ENCODE measurements at regions of chr10 and their contacts with region 1.

Region 1: GRCh38 chr10:69696073-69696731 is 66.2 kb downstream of the FAM241B start:
- DNase-seq: peak; percentile 87
- H3K4me3 ChIP-seq: no peak overlapping the region
- H3K27ac ChIP-seq: peak overlapping the region; percentile 49
- H3K4me1 ChIP-seq: no peaks in the 10 kb centered on the region
- H3K27me3 ChIP-seq: peaks cover 4% of the 10 kb centered on the region
- CTCF ChIP-seq: peak; percentile 69 to 72

Region 2: DNA sequence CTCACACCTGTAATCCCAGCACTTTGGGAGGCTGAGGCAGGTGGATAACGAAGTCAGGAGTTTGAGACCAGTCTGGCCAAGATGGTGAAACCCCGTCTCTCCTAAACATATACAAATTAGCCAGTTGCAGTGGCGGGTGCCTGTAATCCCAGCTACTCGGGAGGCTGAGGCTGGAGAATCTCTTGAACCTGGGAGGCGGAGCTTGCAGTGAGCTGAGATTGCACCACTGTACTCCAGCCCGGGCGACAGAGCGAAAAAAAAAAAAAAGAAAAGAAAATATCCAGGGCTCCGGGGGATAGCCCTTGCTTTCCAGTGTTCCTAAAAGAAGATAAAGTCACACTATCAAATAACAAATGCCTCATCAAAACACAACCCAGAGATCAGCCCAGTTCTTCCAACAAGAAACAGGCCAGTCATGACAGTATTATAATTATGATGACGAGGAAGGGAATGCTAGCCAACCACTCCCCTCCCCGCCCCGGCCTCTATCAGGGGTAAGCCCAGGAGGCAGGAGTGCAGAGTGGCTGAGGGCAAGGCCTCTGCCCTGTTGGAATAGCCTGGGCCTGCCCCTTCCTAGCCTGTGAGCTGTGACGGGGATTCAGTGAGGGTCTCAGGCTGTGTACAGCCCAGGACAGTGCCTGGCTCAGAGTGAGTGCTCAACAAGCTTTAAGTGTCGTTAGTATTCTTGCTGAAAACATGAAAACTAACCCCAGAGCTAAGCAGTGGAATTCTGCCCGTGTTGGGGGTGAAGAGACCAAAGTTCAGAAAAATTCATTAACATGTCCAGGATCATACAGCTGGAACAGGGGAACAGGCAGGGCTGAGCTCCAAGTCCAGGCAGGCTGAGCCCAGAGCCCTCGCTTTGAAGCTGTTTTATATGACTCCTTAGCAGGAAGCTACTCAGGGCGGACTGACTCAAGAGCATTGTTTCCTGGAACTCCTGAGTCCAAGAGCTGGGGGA is 11.9 kb before region 1 on chr10:
- CTCF ChIA-PET with region 1: no interaction called
- dilution Hi-C with region 1: no loop called
- in situ Hi-C with region 1: no loop called
- intact Hi-C with region 1: loop called (anchors 1 kb)
- DNase-seq: peak; percentile 61
- H3K4me3 ChIP-seq: no peak overlapping the region
- H3K27ac ChIP-seq: peak overlapping the region; percentile 75
- H3K4me1 ChIP-seq: peaks cover 24% of the 10 kb centered on the region
- H3K27me3 ChIP-seq: no peaks in the 10 kb centered on the region
- CTCF ChIP-seq: no peak

Region 3: GRCh38 chr10:69766161-69766910 is 70.1 kb after region 1 on chr10:
- CTCF ChIA-PET with region 1: no interaction called
- dilution Hi-C with region 1: no loop called
- in situ Hi-C with region 1: no loop called
- intact Hi-C with region 1: no loop called
- DNase-seq: no peak
- H3K4me3 ChIP-seq: no peak overlapping the region
- H3K27ac ChIP-seq: no peak overlapping the region
- H3K4me1 ChIP-seq: peaks cover 10% of the 10 kb centered on the region
- H3K27me3 ChIP-seq: no peaks in the 10 kb centered on the region
- CTCF ChIP-seq: no peak